Panc1 (cell line): ENCODE measurements at regions of chr11 and their contacts with region 1.

Region 1: DNA sequence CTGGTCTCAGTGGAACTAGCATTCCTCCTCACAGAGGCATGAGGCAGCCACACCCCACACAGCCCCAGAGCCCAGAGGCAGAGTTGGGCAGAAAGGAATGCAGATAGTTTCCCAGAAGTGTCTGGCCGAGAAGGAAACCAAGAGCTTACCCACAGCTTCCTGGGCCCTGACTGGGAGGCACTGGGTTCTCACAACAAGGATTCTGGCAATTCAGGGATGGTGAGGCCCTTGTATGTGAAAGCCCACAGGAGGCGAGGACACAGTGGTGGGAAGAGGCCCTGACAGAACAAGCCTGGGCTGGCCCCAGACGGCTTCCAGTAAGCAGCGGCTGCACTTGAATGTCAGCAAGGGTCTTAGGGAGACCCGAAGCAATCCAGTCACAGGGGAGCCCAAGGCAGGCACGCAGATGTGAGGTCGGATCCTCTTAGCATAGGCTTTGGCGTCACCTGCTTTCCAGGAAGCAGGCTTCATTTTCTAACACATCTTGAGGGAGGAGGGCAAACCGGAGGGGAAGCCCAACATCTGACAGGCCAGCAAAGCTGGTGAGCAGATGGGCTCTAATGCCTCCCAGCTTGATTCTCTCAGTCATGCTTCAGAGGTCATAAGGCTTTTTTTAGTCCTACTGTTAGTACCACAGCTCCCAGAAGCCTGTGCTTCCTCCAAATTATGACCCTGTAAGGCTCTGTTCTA is 78.3 kb upstream of the AKIP1 start:
- DNase-seq: no peak
- ATAC-seq: peak; percentile 15; the same call in 1 of the 2 replicates
- H3K4me3 ChIP-seq: no peak overlapping the region
- H3K27ac ChIP-seq: no peak overlapping the region
- H3K4me1 ChIP-seq: peaks cover 6% of the 10 kb centered on the region; the same call in 1 of the 2 replicates
- H3K27me3 ChIP-seq: no peaks in the 10 kb centered on the region
- CTCF ChIP-seq: no peak

Region 2: GRCh38 chr11:8658321-8659057 is 174.2 kb before region 1 on chr11:
- CTCF ChIA-PET with region 1: no interaction called
- POLR2A ChIA-PET with region 1: no interaction called
- in situ Hi-C with region 1: no loop called
- intact Hi-C with region 1: no loop called
- DNase-seq: no peak
- ATAC-seq: no peak
- H3K4me3 ChIP-seq: no peak overlapping the region
- H3K27ac ChIP-seq: no peak overlapping the region
- H3K4me1 ChIP-seq: no peaks in the 10 kb centered on the region
- H3K27me3 ChIP-seq: no peaks in the 10 kb centered on the region
- CTCF ChIP-seq: no peak

Region 3: GRCh38 chr11:8911029-8911826 is 78.5 kb after region 1 on chr11 and contains the start of gene AKIP1:
- CTCF ChIA-PET with region 1: no interaction called
- POLR2A ChIA-PET with region 1: interaction called, 15 read pairs
- in situ Hi-C with region 1: no loop called
- intact Hi-C with region 1: no loop called
- DNase-seq: no peak
- ATAC-seq: peak; percentile 94
- H3K4me3 ChIP-seq: peak within 1 kb of the TSS; percentile 72 to 81
- H3K27ac ChIP-seq: peak within 1 kb of the TSS; percentile 88
- H3K4me1 ChIP-seq: peaks cover 28% of the 10 kb centered on the region
- H3K27me3 ChIP-seq: no peaks in the 10 kb centered on the region
- CTCF ChIP-seq: no peak
- total RNA-seq, gene AKIP1: 85.2 TPM

Region 4: GRCh38 chr11:9130297-9130696 is 297.6 kb after region 1 on chr11:
- CTCF ChIA-PET with region 1: no interaction called
- POLR2A ChIA-PET with region 1: interaction called, 13 read pairs
- in situ Hi-C with region 1: no loop called
- intact Hi-C with region 1: no loop called
- DNase-seq: no peak
- ATAC-seq: no peak
- H3K4me3 ChIP-seq: no peak overlapping the region
- H3K27ac ChIP-seq: no peak overlapping the region
- H3K4me1 ChIP-seq: no peaks in the 10 kb centered on the region
- H3K27me3 ChIP-seq: no peaks in the 10 kb centered on the region
- CTCF ChIP-seq: no peak